Astrocyte of the cerebellum (primary cell): ENCODE measurements at regions of chr6 and their contacts with region 1.

Region 1: DNA sequence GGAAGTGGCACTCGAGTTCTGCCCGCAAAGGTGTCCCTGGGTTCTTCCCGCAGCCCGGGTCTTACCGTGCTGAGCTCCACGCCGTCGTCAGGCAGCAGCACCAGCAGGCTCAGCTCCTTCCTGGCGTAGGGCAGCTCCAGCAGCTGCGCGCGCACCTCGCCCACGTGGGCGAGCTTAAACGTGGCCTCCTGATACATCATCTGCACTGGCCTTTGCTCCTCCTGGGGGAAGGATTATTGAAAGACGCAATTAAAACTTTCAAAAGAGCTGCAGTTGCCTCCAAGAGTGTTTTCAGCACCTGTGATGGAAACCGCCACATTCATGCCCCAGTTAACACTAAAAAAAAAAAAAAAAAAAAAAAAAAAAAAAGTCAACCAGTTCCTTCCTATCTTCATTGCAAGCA is 11.3 kb downstream of the SERPINB9 start:
- DNase-seq: no peak
- H3K4me3 ChIP-seq: no peak overlapping the region
- CTCF ChIP-seq: no peak

Region 2: DNA sequence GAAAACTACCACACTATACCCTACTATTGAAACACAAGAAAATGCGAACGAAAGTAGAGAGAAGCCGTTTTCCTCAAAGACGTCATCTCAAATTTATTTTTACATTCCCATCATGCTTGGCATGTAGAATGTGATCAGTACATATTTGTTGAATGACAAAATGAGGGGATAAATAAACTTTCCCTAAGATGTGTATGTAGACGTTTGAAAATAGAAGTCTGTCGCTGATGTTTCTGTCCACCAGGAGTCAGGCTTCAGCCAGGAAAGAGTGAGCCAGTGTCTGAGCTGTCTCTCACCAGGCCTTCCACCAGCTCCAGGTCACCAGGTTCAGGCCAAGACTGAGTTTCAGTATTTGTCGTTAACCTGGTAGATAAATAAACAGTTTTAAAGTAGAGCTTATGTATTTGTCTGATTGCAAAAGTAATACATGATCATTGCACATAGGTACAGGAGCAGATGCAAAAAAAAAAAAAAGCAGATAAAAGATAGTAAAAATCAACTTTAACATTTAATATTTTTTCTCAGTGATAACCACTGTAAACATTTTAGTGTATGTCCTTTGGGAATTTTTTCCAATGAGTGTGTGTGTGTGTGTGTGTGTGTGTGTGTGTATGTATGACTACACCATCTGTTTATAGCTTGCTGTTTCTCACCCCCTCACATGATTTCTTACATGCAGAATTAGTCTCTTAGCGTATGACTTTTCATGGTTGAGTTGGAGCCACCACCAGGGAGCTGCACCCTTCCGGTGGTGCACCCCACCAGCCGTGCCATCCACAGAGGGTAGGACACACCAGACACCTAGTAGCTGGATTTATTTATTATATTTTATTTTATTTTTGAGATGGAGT is 100.4 kb before region 1 on chr6:
- in situ Hi-C with region 1: loop called (anchors 5 kb)
- DNase-seq: peak; percentile 49
- H3K4me3 ChIP-seq: no peak overlapping the region
- CTCF ChIP-seq: peak; percentile 81

Region 3: DNA sequence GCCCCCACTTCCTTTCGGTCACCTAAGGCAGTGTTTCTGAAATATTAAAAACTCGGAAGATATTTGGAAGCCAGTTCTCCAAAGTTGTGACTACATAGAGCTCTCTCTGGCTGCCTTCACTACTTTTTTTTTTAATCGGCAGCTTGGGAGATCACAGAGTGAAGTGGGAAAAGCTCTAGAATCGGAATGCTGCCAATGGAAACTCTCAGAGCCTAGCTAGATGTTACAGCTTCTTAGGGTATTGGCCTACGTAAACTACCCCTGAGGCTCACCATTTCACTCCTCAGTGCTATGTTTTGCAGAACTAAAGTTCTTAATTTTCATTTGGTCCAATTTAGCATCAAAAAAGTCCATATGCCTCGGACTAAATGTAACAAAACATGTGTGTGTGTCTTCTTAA is 64.6 kb before region 1 on chr6:
- in situ Hi-C with region 1: loop called (anchors 5 kb)
- DNase-seq: no peak
- H3K4me3 ChIP-seq: no peak overlapping the region
- CTCF ChIP-seq: no peak